ENCODE measurements at regions of chr7 and their contacts with region 1.

Region 1: GRCh38 chr7:7761340-7761980 is 43.1 kb upstream of the RPA3 start:
- DNase-seq: no peak
- ATAC-seq: peak; percentile 74
- H3K4me3 ChIP-seq: peak overlapping the region; percentile 78 to 84
- H3K27ac ChIP-seq: no peak overlapping the region
- H3K4me1 ChIP-seq: no peaks in the 10 kb centered on the region
- H3K27me3 ChIP-seq: no peaks in the 10 kb centered on the region

Region 2: DNA sequence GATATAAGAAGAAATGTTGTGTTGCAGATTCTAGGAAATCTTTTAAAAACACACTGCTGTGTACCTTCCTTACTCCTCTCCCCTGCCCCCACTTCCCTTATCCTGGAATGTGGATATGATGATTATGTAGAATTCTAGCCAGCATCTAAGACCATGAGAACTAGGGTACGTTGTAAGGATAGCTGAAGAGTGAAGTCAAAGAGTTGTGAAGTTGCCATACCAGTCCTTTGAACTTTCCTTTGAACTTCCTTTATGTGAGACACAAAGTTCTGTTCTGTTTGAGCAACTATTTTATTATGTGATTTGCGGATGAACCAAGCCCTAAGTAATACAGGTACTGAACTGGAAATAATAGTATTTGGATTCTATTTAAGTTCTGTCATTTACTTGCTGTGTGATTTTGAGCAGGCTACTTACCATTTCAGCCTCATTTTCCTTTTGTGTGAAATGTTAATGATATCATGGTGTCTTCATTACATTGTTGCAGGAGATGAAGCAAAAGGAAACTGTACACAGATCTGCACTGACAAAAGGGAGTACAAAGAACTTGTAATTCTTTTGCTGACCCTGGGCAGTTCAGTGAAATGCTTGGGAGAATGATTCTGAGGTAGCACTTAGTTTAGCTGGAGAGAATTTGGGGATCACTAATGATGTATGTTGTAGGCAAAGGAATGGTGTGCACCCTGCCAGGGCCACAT is 74.5 kb before region 1 on chr7:
- intact Hi-C with region 1: loop called (anchors 5 kb)
- DNase-seq: no peak
- ATAC-seq: no peak
- H3K4me3 ChIP-seq: no peak overlapping the region
- H3K27ac ChIP-seq: peak overlapping the region in 1 of 2 donors; percentile 44
- H3K4me1 ChIP-seq: peaks cover 3 to 5% of the 10 kb centered on the region in 2 donors
- H3K27me3 ChIP-seq: no peaks in the 10 kb centered on the region

Region 3: DNA sequence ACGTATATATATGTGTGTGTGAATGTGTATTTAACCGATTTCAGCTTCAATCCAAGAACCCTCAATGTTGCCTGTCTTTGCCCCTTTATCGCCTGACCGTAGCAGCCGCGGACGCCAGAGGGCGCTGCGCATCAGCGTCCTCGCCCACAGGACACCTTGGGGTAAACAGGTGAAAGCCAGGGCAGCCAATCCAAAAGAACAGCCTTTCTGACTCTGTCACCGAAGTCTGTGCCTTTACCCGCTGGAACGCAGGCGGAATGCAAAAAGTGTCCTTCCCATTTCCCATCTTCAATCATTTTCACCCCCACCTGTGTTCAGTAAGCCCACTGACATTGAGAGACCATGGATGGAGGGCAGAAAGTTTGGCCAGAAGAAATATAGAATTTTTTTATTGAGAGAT is 675.5 kb after region 1 on chr7:
- intact Hi-C with region 1: no loop called
- DNase-seq: no peak
- ATAC-seq: no peak
- H3K4me3 ChIP-seq: no peak overlapping the region
- H3K27ac ChIP-seq: no peak overlapping the region
- H3K4me1 ChIP-seq: no peaks in the 10 kb centered on the region
- H3K27me3 ChIP-seq: peaks cover 0 to 4% of the 10 kb centered on the region in 2 donors

Measured in aorta (tissue), 5 donors.